Activated CD4-positive, alpha-beta memory T cell treated with anti-CD3 and anti-CD28 coated beads, Interleukin-2, amount 10 ng/mL, durations not matched to agents 7 days and 5 days (primary cell): ENCODE measurements at regions of chr3 and their contacts with region 1.

Region 1: GRCh38 chr3:43162230-43163084 is 56.6 kb upstream of the POMGNT2 start:
- DNase-seq: peak; percentile 70
- H3K4me3 Mint-ChIP-seq: peak overlapping the region; percentile 61
- H3K27ac Mint-ChIP-seq: peak overlapping the region; percentile 97
- H3K4me1 Mint-ChIP-seq: peaks cover 28% of the 10 kb centered on the region
- H3K27me3 Mint-ChIP-seq: peaks cover 2% of the 10 kb centered on the region

Region 2: DNA sequence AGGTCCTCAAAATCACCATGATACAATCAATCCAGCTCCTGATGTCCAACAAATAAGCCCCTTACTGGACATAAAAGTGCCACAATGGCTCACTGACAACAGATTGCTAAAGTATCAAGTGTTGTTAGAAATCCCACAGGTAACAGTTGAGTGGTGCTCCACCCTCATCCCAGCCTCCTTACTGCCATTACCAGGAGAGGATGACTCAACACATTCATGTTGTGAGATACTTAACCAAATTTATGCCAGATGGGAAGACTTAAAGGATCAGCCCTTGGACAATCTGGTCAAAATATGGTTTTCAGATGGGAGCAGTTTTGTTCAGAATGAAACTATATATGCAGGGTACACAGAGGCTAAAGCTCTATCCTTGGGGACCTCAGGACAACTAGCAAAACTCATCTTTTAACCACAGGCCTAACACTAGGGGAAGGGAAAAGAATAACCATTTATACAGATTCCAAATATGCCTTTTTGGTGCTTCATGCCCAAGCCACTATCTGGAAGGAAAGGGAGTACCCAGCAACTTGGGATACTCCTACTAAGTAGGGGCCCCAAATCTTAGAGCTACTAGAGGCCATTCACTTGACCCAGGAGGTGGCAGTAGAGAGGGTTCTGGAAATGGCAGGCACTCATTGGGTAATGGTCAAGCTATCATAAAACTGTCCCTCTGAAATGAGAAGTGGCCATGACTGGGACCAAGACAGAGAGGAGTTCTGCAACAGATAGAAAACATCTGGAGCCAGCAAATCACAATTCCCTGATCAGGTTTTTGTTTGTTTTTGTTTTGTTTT is 263.4 kb before region 1 on chr3:
- CTCF ChIA-PET with region 1: no interaction called
- POLR2A ChIA-PET with region 1: no interaction called
- DNase-seq: no peak
- H3K4me3 Mint-ChIP-seq: no peak overlapping the region
- H3K27ac Mint-ChIP-seq: no peak overlapping the region
- H3K4me1 Mint-ChIP-seq: peaks cover 48% of the 10 kb centered on the region
- H3K27me3 Mint-ChIP-seq: peaks cover 6% of the 10 kb centered on the region

Region 3: DNA sequence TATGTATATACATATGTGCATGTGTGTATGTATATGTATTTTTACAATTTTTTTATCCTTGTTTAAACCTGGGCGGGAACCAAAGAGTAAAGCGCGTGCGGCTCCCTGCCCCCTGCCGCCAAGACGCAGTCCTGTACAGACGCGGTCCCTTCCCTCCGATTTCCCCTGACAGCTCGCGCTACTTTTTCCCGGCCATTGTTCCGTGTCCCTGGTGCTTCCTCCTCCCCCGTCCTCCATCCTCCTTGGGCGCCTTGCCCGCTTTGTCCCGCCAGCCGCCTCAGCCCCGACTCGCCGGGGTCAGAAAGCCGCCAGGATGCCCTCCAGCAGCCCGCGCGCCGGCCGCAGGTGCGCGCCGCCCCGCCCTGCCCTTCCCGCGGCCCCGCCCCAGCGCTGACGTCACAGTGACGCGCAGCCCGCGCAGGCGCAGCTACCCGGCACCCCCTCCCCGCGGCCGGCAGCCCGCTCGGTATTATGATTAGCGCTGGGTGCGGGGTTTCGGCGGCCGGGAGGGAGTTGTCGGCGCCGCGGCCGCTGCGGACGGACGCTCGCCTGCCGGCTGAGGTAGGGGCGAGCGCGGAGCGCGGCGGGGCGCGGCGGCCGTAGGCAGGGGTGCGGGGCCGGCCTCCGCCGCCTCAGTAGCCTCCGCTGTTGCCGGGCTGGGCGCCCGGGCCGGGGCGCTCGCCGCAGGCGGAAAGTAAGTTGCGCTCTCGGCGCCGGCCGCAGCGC is 123.8 kb after region 1 on chr3 and contains the start of gene SNRK:
- CTCF ChIA-PET with region 1: interaction called, 15 read pairs
- POLR2A ChIA-PET with region 1: interaction called, 21 read pairs
- DNase-seq: peak; percentile 91
- H3K4me3 Mint-ChIP-seq: peak within 1 kb of the TSS; percentile 94
- H3K27ac Mint-ChIP-seq: peak within 1 kb of the TSS; percentile 94
- H3K4me1 Mint-ChIP-seq: peaks cover 36% of the 10 kb centered on the region
- H3K27me3 Mint-ChIP-seq: peaks cover 7% of the 10 kb centered on the region
- total RNA-seq, gene SNRK: 71.0 to 73.1 TPM

Region 4: DNA sequence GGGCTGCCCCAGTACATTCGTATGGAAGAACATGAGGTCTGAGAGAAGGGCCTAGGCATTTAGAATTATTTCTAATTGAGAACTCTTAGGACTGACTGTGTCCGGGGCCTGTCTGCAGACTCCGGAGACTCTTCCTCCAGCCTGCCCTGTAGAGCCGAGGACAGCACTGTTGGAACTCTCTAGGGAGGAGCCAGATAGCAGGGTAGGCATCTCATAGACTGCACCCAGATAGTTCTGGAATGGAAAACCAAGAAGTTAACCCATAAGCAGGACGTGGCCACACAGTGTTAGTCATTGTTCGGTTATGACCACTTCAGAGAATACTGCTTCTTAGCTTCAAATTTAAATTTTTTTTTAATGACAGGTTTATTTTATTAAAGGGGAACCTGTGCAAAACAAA is 183.4 kb after region 1 on chr3:
- CTCF ChIA-PET with region 1: interaction called, 4 read pairs
- POLR2A ChIA-PET with region 1: interaction called, 11 read pairs
- DNase-seq: peak; percentile 45
- H3K4me3 Mint-ChIP-seq: no peak overlapping the region
- H3K27ac Mint-ChIP-seq: peak overlapping the region; percentile 89
- H3K4me1 Mint-ChIP-seq: peaks cover 68% of the 10 kb centered on the region
- H3K27me3 Mint-ChIP-seq: no peaks in the 10 kb centered on the region

Region 5: DNA sequence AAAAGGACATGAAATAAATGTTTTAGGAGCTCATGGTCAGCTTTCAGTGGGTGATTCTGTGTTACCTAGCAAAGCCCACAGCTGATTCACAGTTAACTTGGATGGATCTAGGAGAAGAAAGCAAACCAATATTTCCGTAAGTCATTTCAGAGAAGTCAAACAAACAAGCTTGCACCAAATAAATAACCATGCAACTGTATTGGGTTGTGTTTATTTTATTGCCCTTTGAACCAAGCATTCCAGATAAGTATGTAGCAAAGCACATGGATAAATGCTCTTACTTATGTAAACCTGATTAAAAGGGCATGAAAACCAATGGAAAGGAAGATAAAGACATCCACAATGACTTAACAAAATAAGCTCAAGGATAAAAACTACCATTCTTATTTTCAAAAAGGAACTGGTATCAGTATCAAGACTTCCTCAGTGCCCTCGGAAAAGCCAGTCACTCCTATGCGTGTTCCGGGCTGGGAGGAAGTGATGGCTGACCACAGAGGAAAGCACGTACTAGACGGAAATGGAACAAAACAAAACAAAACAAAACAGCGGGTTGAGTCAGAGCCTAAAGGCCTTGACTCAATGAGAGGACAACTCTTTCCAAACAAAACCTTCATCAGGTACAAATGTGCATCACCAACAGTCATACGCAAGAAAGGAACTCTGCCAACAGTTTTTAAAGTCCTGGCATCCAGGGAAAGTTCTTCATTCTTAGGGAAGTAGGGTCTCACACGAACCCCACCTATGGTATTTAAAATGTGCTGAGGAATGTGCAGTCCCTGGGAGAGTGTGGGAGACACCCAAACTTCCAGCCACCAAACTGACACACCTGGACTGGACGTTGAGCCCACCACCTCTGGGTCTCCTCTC is 227.2 kb after region 1 on chr3:
- CTCF ChIA-PET with region 1: interaction called, 12 read pairs
- POLR2A ChIA-PET with region 1: interaction called, 6 read pairs
- DNase-seq: peak; percentile 85
- H3K4me3 Mint-ChIP-seq: peak overlapping the region; percentile 26
- H3K27ac Mint-ChIP-seq: peak overlapping the region; percentile 94
- H3K4me1 Mint-ChIP-seq: peaks cover 45% of the 10 kb centered on the region
- H3K27me3 Mint-ChIP-seq: peaks cover under 1% of the 10 kb centered on the region